MCF 10A (cell line): ENCODE measurements at regions of chr9 and their contacts with region 1.

Region 1: DNA sequence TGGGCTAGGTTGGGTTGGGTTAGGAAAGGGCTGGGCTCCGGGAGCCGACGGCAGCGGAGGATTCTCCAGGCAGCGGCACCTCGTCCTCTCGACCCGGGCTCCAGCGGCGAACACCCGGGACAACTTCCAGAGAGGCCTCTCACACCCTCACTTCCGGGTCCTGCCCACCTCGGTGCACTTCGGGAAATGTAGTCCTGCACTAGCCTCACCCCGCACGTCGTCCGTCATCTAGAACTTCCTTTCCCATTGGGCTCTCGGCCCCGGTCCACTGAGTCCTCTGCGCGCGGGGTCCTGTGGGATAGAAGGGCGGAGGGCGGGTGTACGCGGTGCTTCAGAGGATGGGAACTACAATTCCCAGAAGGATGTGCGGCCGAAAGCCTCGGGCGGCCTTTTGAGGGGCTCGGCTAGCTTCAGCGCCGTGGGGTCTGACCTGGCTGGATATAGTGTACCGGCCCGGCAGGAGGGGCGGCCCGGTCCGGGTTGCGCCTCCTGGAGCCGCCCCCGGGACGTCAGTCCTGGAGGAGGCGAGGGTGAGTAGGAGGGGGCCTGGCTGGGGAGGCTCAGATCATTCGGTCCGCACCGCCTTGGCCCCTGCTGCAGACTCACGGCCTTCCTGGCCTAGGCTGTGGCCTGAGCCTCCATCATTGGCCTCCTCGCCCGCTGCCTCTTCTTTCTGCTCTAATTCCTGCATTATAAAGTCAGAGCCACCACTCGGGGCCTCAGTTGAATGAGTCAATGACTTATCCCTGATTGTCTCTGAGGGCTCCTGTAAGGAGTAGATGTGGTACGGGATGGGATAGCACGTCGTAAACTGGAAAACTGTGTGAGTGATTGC is at the starts of genes ERP44 and INVS:
- DNase-seq: peak; percentile 99
- H3K4me3 Mint-ChIP-seq: peak within 1 kb of the TSS; percentile 97
- H3K27ac Mint-ChIP-seq: peak within 1 kb of the TSS; percentile 96
- H3K4me1 Mint-ChIP-seq: peaks cover 23% of the 10 kb centered on the region
- H3K27me3 Mint-ChIP-seq: no peaks in the 10 kb centered on the region
- CTCF ChIP-seq: no peak
- total RNA-seq, gene ERP44: 26.3 and 31.8 TPM in 2 replicates
- total RNA-seq, gene INVS: 21.9 and 24.9 TPM in 2 replicates

Region 2: GRCh38 chr9:100011062-100011681 is 87.9 kb before region 1 on chr9:
- CTCF ChIA-PET with region 1: no interaction called
- POLR2A ChIA-PET with region 1: no interaction called
- intact Hi-C with region 1: no loop called
- DNase-seq: peak; percentile 60
- H3K4me3 Mint-ChIP-seq: no peak overlapping the region
- H3K27ac Mint-ChIP-seq: no peak overlapping the region
- H3K4me1 Mint-ChIP-seq: no peaks in the 10 kb centered on the region
- H3K27me3 Mint-ChIP-seq: no peaks in the 10 kb centered on the region
- CTCF ChIP-seq: peak; percentile 62

Region 3: GRCh38 chr9:100084734-100085133 is 14.4 kb before region 1 on chr9:
- CTCF ChIA-PET with region 1: interaction called, 3 read pairs
- POLR2A ChIA-PET with region 1: interaction called, 20 read pairs
- intact Hi-C with region 1: no loop called
- DNase-seq: no peak
- H3K4me3 Mint-ChIP-seq: no peak overlapping the region
- H3K27ac Mint-ChIP-seq: no peak overlapping the region
- H3K4me1 Mint-ChIP-seq: peaks cover 36% of the 10 kb centered on the region
- H3K27me3 Mint-ChIP-seq: no peaks in the 10 kb centered on the region
- CTCF ChIP-seq: no peak

Region 4: DNA sequence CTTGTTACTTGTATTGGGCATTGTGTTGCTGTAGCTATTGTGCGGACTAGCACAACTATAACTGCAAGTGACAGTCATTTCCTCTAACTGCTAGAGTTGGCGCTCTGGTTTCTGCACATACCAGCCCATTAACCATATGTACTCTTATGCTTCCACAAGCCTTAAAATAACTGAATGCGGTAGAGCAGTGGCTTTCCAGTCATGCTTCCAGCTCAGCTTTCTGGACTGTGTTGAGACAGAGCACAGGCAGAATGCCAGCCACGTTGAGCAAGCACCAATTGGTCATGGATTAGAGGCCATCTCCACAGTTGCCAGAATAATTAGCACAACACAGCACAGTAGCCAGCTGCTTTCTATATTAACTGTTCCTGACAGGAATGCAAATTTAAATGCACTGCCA is 12.1 kb after region 1 on chr9:
- CTCF ChIA-PET with region 1: interaction called, 3 read pairs
- POLR2A ChIA-PET with region 1: interaction called, 23 read pairs
- intact Hi-C with region 1: no loop called
- DNase-seq: peak; percentile 97
- H3K4me3 Mint-ChIP-seq: peak overlapping the region; percentile 28
- H3K27ac Mint-ChIP-seq: no peak overlapping the region
- H3K4me1 Mint-ChIP-seq: peaks cover 19% of the 10 kb centered on the region
- H3K27me3 Mint-ChIP-seq: no peaks in the 10 kb centered on the region
- CTCF ChIP-seq: no peak

Region 5: DNA sequence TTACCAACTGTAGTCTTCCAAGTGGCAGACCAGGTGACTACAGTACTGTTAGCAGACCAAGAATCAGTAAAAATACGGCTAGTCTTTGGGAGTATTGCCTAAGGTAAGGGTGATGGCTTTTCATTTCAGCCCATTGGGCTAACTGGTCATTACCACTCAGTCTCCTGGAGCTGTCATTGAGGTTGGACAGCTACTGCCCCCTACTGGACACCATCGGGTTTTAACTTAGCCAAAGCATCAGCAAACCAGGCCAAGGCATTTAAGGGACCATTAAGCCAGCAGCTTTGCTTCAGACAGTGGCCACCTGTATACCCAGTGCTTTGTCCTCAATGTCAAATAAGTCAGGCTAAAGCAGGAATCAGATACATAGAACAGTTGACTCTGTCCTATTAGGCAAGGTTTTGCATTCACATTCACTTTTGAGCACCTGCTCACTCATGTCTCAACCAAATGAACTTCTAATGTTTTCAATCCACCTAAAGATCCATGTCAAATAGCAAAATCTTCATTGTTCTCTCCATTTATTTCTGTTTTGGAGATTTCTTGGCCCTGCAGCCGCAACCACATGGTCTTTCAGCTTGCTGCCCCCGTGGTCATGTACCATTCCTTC is 117.2 kb after region 1 on chr9:
- CTCF ChIA-PET with region 1: interaction called, 3 read pairs
- POLR2A ChIA-PET with region 1: no interaction called
- intact Hi-C with region 1: loop called (anchors 5 kb)
- DNase-seq: peak; percentile 74
- H3K4me3 Mint-ChIP-seq: no peak overlapping the region
- H3K27ac Mint-ChIP-seq: no peak overlapping the region
- H3K4me1 Mint-ChIP-seq: no peaks in the 10 kb centered on the region
- H3K27me3 Mint-ChIP-seq: no peaks in the 10 kb centered on the region
- CTCF ChIP-seq: peak; percentile 60

Region 6: GRCh38 chr9:100229561-100229960 is 130.5 kb after region 1 on chr9:
- CTCF ChIA-PET with region 1: no interaction called
- POLR2A ChIA-PET with region 1: no interaction called
- intact Hi-C with region 1: no loop called
- DNase-seq: no peak
- H3K4me3 Mint-ChIP-seq: no peak overlapping the region
- H3K27ac Mint-ChIP-seq: no peak overlapping the region
- H3K4me1 Mint-ChIP-seq: no peaks in the 10 kb centered on the region
- H3K27me3 Mint-ChIP-seq: no peaks in the 10 kb centered on the region
- CTCF ChIP-seq: no peak

Region 7: DNA sequence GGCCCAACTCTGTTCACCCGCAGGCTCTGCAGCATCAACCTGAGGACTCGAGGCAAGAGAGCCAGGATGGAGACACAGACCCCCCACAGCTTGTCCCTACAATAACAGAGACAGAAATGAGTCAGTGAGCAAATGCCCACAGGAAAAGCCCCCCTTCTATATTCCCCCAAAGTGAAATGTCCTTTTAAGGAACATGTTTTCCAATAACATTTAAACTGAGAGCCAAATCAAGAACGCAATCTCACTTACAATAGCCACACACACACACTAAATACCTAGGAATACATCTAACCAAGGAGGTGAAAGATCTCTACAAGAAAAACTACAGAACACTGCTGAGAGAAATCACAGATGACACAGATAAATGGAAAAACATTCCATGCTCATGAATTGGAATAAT is 204.6 kb after region 1 on chr9:
- CTCF ChIA-PET with region 1: no interaction called
- POLR2A ChIA-PET with region 1: no interaction called
- intact Hi-C with region 1: no loop called
- DNase-seq: no peak
- H3K4me3 Mint-ChIP-seq: no peak overlapping the region
- H3K27ac Mint-ChIP-seq: no peak overlapping the region
- H3K4me1 Mint-ChIP-seq: no peaks in the 10 kb centered on the region
- H3K27me3 Mint-ChIP-seq: no peaks in the 10 kb centered on the region
- CTCF ChIP-seq: no peak